PC-9 (cell line): ENCODE measurements at regions of chr11 and their contacts with region 1.

Region 1: GRCh38 chr11:119101759-119102423 is at the start of gene DPAGT1:
- DNase-seq: peak; percentile 85 to 98
- H3K4me3 ChIP-seq: peak within 1 kb of the TSS; percentile 79
- H3K27ac ChIP-seq: peak within 1 kb of the TSS; percentile 87
- H3K4me1 ChIP-seq: peaks cover 31% of the 10 kb centered on the region
- H3K27me3 ChIP-seq: no peaks in the 10 kb centered on the region
- CTCF ChIP-seq: no peak
- total RNA-seq, gene DPAGT1: 32.8 and 41.1 TPM in 2 replicates

Region 2: DNA sequence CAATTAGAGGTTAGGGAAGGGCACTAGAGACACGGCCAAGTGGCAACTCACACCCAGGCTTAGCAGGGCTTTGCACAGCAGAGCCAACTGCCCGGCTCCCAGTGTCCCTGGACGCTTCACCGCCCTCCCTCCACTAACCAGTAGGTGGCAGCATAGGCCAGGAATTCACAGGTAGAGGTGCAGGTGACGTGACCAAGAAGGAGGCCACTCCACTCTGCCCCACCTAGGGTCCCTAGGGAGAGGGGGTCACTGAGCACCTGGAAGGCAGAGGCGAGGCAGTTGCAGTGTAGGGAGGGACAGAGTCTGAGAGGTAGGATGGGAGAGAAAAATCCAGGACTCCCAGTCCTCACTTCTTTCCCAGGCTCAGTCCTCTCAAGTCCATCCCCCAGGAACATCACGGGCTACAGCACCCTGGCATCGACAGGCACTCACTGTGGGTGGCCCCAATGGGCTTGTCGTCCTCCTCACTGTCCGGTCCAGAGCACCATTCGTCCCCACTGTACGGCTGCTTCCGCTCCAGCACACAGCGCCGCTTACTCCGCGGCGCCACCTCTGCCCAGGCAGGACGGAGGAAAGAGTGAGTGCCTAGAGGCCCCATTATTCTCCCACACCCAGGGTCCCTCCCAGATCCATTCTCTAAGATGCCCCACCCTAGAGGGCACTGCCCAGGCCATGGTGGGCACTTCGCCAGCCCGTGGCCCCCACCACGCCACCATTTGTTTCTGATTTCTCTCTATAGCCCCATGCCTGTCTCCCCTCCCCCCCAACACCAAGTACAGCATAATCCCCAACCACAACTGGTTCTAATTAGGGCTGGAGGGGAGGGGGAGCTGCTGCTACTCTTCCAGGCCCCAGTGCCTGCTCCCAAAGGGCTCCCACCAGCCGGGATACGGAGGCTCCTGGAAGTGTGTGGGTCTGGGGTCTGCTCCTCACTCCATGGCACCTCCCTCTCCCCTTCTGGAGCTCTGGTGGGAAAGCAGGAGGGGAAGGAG is 194.5 kb before region 1 on chr11:
- CTCF ChIA-PET with region 1: no interaction called
- POLR2A ChIA-PET with region 1: interaction called, 4 read pairs
- intact Hi-C with region 1: loop called (anchors 5 kb)
- DNase-seq: peak; percentile 78 to 89
- H3K4me3 ChIP-seq: no peak overlapping the region
- H3K27ac ChIP-seq: peak overlapping the region; percentile 21; the same call in 1 of the 2 replicates
- H3K4me1 ChIP-seq: peaks cover 50% of the 10 kb centered on the region
- H3K27me3 ChIP-seq: no peaks in the 10 kb centered on the region
- CTCF ChIP-seq: peak; percentile 99

Region 3: GRCh38 chr11:118939953-118940598 is 161.8 kb before region 1 on chr11:
- CTCF ChIA-PET with region 1: no interaction called
- POLR2A ChIA-PET with region 1: no interaction called
- intact Hi-C with region 1: no loop called
- DNase-seq: peak in 1 of 2 experiments; percentile 19
- H3K4me3 ChIP-seq: no peak overlapping the region
- H3K27ac ChIP-seq: no peak overlapping the region
- H3K4me1 ChIP-seq: peaks cover 19% of the 10 kb centered on the region
- H3K27me3 ChIP-seq: no peaks in the 10 kb centered on the region
- CTCF ChIP-seq: no peak

Region 4: GRCh38 chr11:119044708-119045107 is 57.2 kb before region 1 on chr11:
- CTCF ChIA-PET with region 1: no interaction called
- POLR2A ChIA-PET with region 1: interaction called, 11 read pairs
- intact Hi-C with region 1: no loop called
- DNase-seq: peak in 1 of 2 experiments; percentile 21
- H3K4me3 ChIP-seq: no peak overlapping the region
- H3K27ac ChIP-seq: no peak overlapping the region
- H3K4me1 ChIP-seq: no peaks in the 10 kb centered on the region
- H3K27me3 ChIP-seq: no peaks in the 10 kb centered on the region
- CTCF ChIP-seq: peak; percentile 47

Region 5: GRCh38 chr11:119168471-119169281 is 66.8 kb after region 1 on chr11 and contains the start of gene NLRX1:
- CTCF ChIA-PET with region 1: no interaction called
- POLR2A ChIA-PET with region 1: interaction called, 7 read pairs
- intact Hi-C with region 1: loop called (anchors 1 kb)
- DNase-seq: peak; percentile 67 to 80
- H3K4me3 ChIP-seq: peak within 1 kb of the TSS; percentile 69
- H3K27ac ChIP-seq: peak within 1 kb of the TSS; percentile 81
- H3K4me1 ChIP-seq: peaks cover 33% of the 10 kb centered on the region
- H3K27me3 ChIP-seq: no peaks in the 10 kb centered on the region
- CTCF ChIP-seq: peak; percentile 92
- total RNA-seq, gene NLRX1: 18.4 and 22.5 TPM in 2 replicates

Region 6: GRCh38 chr11:119315131-119316015 is 213.5 kb after region 1 on chr11:
- CTCF ChIA-PET with region 1: interaction called, 5 read pairs
- POLR2A ChIA-PET with region 1: no interaction called
- intact Hi-C with region 1: loop called (anchors 5 kb)
- DNase-seq: peak; percentile 65 to 71
- H3K4me3 ChIP-seq: peak overlapping the region; percentile 67
- H3K27ac ChIP-seq: no peak overlapping the region
- H3K4me1 ChIP-seq: peaks cover 31% of the 10 kb centered on the region
- H3K27me3 ChIP-seq: peaks cover 20% of the 10 kb centered on the region
- CTCF ChIP-seq: peak; percentile 34; the same call in 1 of the 2 replicates